Activated CD8-positive, alpha-beta T cell treated with anti-CD3 and anti-CD28 coated beads for 36 hours (primary cell): ENCODE measurements at regions of chr22 and their contacts with region 1.

Region 1: DNA sequence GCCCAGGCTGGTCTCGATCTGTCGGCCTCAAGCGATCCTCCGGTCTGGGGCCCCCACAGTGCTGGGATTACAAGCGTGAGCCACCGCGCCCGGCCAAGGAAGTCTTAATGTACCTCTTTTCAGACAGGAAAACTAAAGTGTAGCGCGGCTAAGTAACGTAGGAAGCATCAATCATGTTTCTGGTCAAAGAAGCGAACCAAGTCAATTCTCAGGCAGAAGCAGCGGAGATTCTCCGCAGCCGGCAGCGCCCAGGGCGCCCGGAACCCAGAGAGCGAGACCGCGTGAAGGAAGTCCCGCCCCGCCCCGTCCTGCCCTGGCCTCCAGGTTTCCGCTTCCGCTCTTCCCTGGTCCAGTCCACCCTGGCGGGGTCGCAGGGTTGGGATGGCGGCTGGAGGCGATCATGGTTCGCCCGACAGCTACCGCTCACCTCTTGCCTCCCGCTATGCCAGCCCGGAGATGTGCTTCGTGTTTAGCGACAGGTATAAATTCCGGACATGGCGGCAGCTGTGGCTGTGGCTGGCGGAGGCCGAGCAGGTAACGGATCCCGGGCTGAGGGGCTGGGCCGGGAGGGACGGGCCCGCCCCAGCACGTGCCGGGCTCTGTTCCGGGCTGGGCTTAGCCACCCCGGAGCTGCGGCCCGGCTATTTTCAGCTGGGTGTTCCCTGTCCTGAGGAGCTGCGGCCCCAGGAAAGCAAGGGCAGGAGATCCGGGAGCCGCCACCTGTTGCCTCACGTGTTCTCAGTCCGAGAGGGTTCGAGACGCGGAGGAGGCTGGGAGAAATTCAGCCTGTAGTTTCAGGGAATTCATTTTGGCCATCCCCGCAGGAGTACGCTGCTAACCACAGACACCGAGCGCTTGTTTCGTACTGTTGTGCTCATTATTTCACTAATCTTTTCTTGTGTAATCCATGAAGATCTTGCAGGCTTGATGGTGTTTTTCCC is at the start of gene ADSL:
- DNase-seq: peak; percentile 92
- ATAC-seq: peak; percentile 90
- H3K4me3 Mint-ChIP-seq: peak within 1 kb of the TSS; percentile 96
- H3K27ac Mint-ChIP-seq: peak within 1 kb of the TSS; percentile 96
- H3K4me1 Mint-ChIP-seq: peaks cover 41% of the 10 kb centered on the region
- H3K27me3 Mint-ChIP-seq: no peaks in the 10 kb centered on the region
- CTCF ChIP-seq: no peak
- total RNA-seq, gene ADSL: 160 to 169 TPM

Region 2: GRCh38 chr22:40055143-40055883 is 291.1 kb before region 1 on chr22:
- CTCF ChIA-PET with region 1: interaction called, 13 read pairs
- POLR2A ChIA-PET with region 1: interaction called, 10 read pairs
- intact Hi-C with region 1: no loop called
- DNase-seq: peak; percentile 50
- ATAC-seq: peak; percentile 86
- H3K4me3 Mint-ChIP-seq: peak overlapping the region; percentile 74
- H3K27ac Mint-ChIP-seq: peak overlapping the region; percentile 95
- H3K4me1 Mint-ChIP-seq: peaks cover 78% of the 10 kb centered on the region
- H3K27me3 Mint-ChIP-seq: no peaks in the 10 kb centered on the region
- CTCF ChIP-seq: no peak

Region 3: DNA sequence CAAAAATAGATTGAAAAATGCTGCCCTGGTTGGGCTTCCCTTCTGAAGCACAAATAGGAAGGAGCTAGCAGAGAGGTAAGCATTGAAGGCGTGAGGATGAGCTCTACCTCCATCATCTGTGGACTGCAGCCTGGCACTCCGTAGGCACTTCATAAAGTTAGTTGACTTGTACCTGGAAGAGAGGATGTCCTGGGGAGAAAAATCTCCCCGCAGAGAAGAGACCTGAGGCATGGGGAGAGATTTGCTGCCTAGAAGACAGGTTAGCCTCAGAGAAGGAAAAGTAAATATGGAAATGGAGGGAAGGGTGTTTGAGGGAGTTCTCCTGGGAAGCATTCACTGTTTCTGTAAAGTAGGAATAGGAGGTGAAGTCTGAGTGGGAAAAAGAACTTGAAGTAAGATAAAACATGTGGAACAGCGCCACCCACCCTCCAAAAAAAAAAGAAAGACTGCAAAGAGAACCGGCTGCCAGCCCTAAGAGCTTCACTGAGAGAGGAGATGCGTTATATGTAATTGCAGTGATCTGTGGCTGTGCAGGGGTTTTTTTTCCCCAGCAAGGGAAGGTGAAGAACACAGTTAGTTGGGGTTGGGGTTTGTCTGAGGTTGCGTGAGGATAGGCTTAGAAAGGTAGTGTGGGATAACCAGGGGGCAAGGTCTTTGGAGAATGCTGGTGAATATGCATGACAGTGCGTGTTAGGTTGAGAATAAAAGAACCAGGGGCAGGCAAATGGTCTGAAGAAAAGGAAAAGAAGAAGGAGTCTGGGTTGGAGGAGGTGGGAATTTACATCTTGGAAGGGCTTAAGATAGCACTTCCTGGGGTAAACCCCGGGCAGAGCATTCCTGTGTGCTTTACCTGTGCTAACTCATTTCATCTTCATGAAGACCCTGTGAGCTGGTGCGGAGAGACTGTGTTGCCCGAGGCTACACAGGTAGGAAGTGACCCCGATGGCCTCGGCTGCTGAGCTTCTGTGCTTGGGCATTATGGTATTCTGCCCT is 152.7 kb before region 1 on chr22:
- CTCF ChIA-PET with region 1: interaction called, 27 read pairs
- POLR2A ChIA-PET with region 1: interaction called, 3 read pairs
- intact Hi-C with region 1: no loop called
- DNase-seq: peak; percentile 36
- ATAC-seq: no peak
- H3K4me3 Mint-ChIP-seq: no peak overlapping the region
- H3K27ac Mint-ChIP-seq: peak overlapping the region; percentile 78
- H3K4me1 Mint-ChIP-seq: peaks cover 74% of the 10 kb centered on the region
- H3K27me3 Mint-ChIP-seq: no peaks in the 10 kb centered on the region
- CTCF ChIP-seq: peak; percentile 27

Region 4: DNA sequence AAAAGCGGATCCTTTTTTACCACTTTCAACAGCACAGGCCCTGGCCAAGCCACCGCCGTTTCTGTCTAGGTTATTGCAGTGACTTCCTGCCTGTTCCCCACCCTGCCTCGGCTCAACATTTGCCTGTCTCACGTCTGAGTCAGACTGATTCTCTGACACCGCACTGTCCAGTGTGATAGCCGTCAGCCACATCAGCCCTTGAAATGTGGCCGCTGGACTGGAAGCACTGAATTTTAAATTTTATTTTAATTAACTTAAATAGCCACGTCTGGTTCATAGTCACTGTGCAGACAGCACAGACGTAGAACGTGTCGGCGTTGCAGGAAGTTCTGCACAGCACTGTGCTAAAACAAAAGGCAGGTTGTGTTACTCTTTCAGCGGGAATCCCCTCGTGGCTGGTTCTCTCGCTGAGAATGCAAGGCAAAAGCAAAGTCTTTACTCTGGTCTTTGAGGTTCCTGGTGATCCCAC is 56.4 kb before region 1 on chr22:
- CTCF ChIA-PET with region 1: interaction called, 4 read pairs
- POLR2A ChIA-PET with region 1: interaction called, 4 read pairs
- intact Hi-C with region 1: loop called (anchors 10 kb)
- DNase-seq: peak; percentile 83
- ATAC-seq: peak; percentile 87
- H3K4me3 Mint-ChIP-seq: peak overlapping the region; percentile 56
- H3K27ac Mint-ChIP-seq: peak overlapping the region; percentile 96
- H3K4me1 Mint-ChIP-seq: peaks cover 52% of the 10 kb centered on the region
- H3K27me3 Mint-ChIP-seq: no peaks in the 10 kb centered on the region
- CTCF ChIP-seq: no peak

Region 5: DNA sequence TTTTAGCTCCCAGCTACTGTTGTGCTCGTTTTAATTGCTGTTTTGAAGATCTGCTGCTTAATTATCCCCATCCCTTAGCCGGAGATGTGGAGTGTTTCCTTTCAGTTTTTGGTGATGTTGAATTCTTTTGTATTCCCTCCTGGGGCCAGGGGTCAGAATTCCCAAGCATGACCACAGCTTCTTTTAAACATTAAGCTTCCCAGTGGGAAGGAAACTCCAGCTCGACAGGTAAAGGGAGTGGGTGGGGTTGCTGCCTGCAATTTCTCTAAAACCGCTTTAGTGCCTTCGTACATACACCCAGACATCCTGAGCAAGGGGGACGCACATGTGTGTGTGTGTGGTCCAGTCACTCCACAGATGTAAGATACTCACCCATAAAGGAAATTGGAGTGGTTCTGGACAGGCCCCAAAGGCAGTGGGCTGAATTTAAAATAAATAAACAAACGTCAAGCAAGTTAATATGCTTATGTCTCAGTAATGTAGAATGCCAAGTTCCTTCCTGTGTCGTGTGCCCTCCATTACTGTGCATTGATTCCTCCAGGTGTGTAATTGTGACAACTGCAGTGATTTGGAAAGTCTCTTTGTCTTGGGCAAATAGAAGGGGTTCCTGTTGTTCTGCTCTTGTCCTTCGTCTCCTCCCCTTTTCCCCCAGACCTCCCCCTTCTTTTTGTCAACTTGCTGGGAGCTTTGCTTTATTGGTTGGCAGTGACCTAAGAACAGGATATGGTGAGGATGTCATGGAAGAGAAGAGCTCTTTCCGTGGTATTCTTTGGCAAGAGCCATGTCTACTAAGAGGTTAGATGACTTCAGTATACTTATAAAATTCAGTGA is 19.3 kb before region 1 on chr22:
- CTCF ChIA-PET with region 1: interaction called, 20 read pairs
- POLR2A ChIA-PET with region 1: interaction called, 9 read pairs
- intact Hi-C with region 1: no loop called
- DNase-seq: peak; percentile 29
- ATAC-seq: peak; percentile 9
- H3K4me3 Mint-ChIP-seq: peak overlapping the region; percentile 22
- H3K27ac Mint-ChIP-seq: peak overlapping the region; percentile 87
- H3K4me1 Mint-ChIP-seq: peaks cover 93% of the 10 kb centered on the region
- H3K27me3 Mint-ChIP-seq: no peaks in the 10 kb centered on the region
- CTCF ChIP-seq: no peak

Region 6: DNA sequence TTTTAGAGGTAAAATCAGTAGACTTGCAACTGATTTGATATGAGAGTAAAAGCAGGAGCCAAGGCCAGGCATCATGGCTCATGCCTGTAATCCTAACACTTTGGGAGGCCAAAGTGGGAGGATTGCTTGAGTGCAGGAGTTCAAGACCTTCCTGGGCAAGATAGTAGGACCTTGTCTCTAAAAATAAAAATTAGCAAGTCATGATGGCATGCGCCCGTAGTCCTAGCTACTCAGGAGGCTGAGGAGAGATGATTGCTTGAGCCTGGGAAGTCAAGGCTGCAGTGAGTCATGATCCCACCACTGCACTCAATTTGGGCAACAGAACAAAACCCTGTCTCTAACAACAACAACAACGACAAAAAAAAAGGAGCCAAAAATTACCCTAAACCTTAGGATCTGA is 37.5 kb after region 1 on chr22:
- CTCF ChIA-PET with region 1: interaction called, 12 read pairs
- POLR2A ChIA-PET with region 1: no interaction called
- intact Hi-C with region 1: no loop called
- DNase-seq: no peak
- ATAC-seq: no peak
- H3K4me3 Mint-ChIP-seq: no peak overlapping the region
- H3K27ac Mint-ChIP-seq: peak overlapping the region; percentile 65
- H3K4me1 Mint-ChIP-seq: peaks cover 57% of the 10 kb centered on the region
- H3K27me3 Mint-ChIP-seq: no peaks in the 10 kb centered on the region
- CTCF ChIP-seq: no peak

Region 7: GRCh38 chr22:40436505-40437451 is 90.3 kb after region 1 on chr22:
- CTCF ChIA-PET with region 1: no interaction called
- POLR2A ChIA-PET with region 1: no interaction called
- intact Hi-C with region 1: no loop called
- DNase-seq: peak; percentile 50
- ATAC-seq: peak; percentile 71
- H3K4me3 Mint-ChIP-seq: peak overlapping the region; percentile 17
- H3K27ac Mint-ChIP-seq: peak overlapping the region; percentile 83
- H3K4me1 Mint-ChIP-seq: peaks cover 61% of the 10 kb centered on the region
- H3K27me3 Mint-ChIP-seq: no peaks in the 10 kb centered on the region
- CTCF ChIP-seq: peak; percentile 78